Left colon (tissue), 2 donors: ENCODE measurements at regions of chr3 and their contacts with region 1.

Region 1: DNA sequence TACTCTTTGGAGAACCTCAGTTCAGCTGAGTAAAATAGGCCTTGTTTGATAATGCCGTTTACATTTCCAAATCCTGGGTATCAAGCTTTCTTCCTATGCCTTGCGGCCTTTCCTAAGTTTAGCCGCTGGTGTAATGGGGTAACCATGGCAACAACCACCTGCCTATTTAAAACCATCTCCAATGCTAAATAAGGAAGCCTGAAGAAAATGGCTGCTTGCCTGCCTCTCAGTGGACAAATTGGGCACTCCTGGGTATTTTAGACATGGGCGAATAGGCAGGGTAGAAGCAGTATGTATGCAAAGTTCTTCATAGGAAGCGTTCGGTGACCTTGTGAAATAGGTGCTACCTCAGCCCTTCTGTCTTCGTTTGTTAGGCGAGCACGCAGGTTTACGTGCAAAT is 122.7 kb downstream of the DGKG start:
- DNase-seq: no peak
- ATAC-seq: no peak

Region 2: DNA sequence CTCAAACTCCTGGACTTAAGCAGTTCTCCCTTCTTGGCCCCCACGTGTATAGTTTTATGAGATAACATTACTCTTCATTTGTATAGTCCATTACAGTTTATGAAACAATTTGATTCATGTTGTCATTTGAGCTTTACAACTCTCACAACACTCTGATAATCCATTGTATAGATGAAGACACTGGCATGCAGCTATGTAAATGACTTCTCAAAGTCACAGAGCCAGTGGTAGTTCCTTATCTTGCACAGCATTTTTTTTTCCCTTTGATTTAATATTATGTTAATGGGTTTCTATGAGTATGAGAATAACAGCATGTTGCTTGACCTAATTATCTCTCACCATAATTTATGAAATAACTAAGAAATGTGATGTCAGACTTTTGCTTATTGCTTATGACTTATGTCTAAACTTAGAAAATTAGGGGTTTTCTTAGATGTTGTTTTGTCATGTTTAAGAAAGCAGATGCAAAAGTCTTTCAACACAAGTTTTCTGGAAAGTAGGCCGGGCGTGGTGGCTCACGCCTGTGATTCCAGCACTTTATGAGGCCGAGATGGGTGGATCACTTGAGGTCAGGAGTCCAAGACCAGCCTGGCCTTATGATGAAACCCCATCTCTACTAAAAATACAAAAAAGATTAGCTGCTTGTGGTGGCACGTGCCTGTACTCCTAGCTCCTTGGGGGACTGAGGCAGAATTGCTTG is 1414.0 kb before region 1 on chr3:
- intact Hi-C with region 1: no loop called
- DNase-seq: peak; percentile 60 to 73
- ATAC-seq: peak; percentile 87

Region 3: GRCh38 chr3:185983495-185984141 is 255.7 kb before region 1 on chr3:
- intact Hi-C with region 1: loop called in 1 of 2 experiments (anchors 10 kb)
- DNase-seq: peak; percentile 46 to 73
- ATAC-seq: peak; percentile 89